ENCODE measurements at regions of chr15 and their contacts with region 1.

Region 1: GRCh38 chr15:99343881-99344551 is 92.7 kb downstream of the LRRC28 start:
- DNase-seq: peak; percentile 45 to 69 (median 52)
- ATAC-seq: peak; percentile 81 to 92 (median 88)
- H3K4me3 ChIP-seq: no peak overlapping the region
- H3K27ac ChIP-seq: peak overlapping the region in 11 of 12 donors; percentile 0 to 50 (median 27)
- H3K4me1 ChIP-seq: peaks cover 0 to 24% (median 9%) of the 10 kb centered on the region in 12 donors
- H3K27me3 ChIP-seq: no peaks in the 10 kb centered on the region
- CTCF ChIP-seq: peak; percentile 33 to 71 (median 52)
- POLR2A ChIP-seq: no peak

Region 2: GRCh38 chr15:97490429-97490828 is 1853.6 kb before region 1 on chr15:
- intact Hi-C with region 1: no loop called
- DNase-seq: no peak
- ATAC-seq: no peak
- H3K4me3 ChIP-seq: no peak overlapping the region
- H3K27ac ChIP-seq: no peak overlapping the region
- H3K4me1 ChIP-seq: no peaks in the 10 kb centered on the region
- H3K27me3 ChIP-seq: no peaks in the 10 kb centered on the region
- CTCF ChIP-seq: no peak
- POLR2A ChIP-seq: no peak

Region 3: DNA sequence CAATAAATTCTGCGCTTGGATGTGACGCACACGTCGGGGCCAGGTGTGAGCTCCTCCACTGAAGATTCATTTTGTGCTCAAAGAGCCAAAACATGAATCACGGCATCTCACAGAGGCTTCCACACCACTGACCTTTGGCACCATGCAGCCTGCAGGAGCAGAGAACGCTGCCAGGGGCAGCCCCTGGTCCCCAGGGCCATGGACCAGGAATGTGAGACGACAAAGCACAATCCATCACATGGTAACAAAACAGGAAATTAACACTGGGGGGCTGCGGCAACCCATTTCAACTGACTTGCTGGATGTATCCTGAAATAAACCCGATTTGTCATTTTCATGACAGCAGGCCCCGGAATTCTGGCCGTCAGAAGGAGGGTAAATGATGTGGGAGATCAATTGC is 863.2 kb before region 1 on chr15:
- intact Hi-C with region 1: no loop called
- DNase-seq: no peak
- ATAC-seq: no peak
- H3K4me3 ChIP-seq: no peak overlapping the region
- H3K27ac ChIP-seq: no peak overlapping the region
- H3K4me1 ChIP-seq: no peaks in the 10 kb centered on the region
- H3K27me3 ChIP-seq: no peaks in the 10 kb centered on the region
- CTCF ChIP-seq: no peak
- POLR2A ChIP-seq: no peak

Region 4: DNA sequence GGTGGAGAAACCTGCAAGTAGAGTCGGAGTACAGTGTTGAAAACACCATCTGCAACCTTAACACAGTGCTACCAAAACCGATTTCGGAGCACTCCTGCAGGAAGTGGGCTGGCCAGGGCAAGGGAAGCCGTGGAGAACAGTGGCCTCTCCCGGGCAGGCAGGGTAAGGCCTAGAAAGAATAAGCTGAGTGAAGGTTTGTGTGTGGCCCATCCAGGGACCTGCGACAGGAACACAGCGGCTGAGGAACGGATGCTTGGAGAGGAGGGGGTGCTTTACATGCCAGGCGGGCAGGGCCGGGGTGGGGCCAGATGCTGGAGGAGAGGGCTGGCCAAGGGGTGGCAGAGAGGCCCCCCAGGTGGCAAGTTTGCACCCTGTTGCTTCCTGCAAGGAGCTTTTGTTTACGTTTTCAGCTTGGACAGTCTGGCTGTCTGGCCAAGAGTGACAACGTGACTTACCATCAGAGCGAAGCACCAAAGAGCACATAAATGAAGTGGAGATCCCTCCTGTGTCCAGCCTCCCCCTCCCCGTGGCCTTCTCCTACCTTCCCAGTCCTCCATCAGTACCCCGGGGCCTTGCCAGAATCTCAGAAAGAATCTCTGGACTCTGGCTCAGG is 492.9 kb before region 1 on chr15:
- intact Hi-C with region 1: no loop called
- DNase-seq: peak; percentile 73 to 83 (median 83)
- ATAC-seq: peak; percentile 60 to 82 (median 71)
- H3K4me3 ChIP-seq: peak overlapping the region in 5 of 12 donors; percentile 62 to 84 (median 70)
- H3K27ac ChIP-seq: peak overlapping the region in 11 of 12 donors; percentile 62 to 93 (median 87)
- H3K4me1 ChIP-seq: peaks cover 17 to 67% (median 44%) of the 10 kb centered on the region in 12 donors
- H3K27me3 ChIP-seq: no peaks in the 10 kb centered on the region
- CTCF ChIP-seq: peak; percentile 63 to 89 (median 73)
- POLR2A ChIP-seq: no peak

Region 5: GRCh38 chr15:99250494-99251435 is 93.3 kb before region 1 on chr15:
- intact Hi-C with region 1: no loop called
- DNase-seq: peak; percentile 98 to 99 (median 99)
- ATAC-seq: peak; percentile 92 to 97 (median 96)
- H3K4me3 ChIP-seq: peak overlapping the region; percentile 42 to 87 (median 74)
- H3K27ac ChIP-seq: peak overlapping the region; percentile 87 to 97 (median 92)
- H3K4me1 ChIP-seq: peaks cover 0 to 48% (median 23%) of the 10 kb centered on the region in 12 donors
- H3K27me3 ChIP-seq: no peaks in the 10 kb centered on the region
- CTCF ChIP-seq: no peak
- POLR2A ChIP-seq: peak in 1 of 2 donors; percentile 67

Region 6: GRCh38 chr15:99296386-99296785 is 47.6 kb before region 1 on chr15:
- intact Hi-C with region 1: loop called in 1 of 10 experiments (anchors 10 kb)
- DNase-seq: no peak
- ATAC-seq: no peak
- H3K4me3 ChIP-seq: no peak overlapping the region
- H3K27ac ChIP-seq: no peak overlapping the region
- H3K4me1 ChIP-seq: no peaks in the 10 kb centered on the region
- H3K27me3 ChIP-seq: no peaks in the 10 kb centered on the region
- CTCF ChIP-seq: no peak
- POLR2A ChIP-seq: no peak

Region 7: DNA sequence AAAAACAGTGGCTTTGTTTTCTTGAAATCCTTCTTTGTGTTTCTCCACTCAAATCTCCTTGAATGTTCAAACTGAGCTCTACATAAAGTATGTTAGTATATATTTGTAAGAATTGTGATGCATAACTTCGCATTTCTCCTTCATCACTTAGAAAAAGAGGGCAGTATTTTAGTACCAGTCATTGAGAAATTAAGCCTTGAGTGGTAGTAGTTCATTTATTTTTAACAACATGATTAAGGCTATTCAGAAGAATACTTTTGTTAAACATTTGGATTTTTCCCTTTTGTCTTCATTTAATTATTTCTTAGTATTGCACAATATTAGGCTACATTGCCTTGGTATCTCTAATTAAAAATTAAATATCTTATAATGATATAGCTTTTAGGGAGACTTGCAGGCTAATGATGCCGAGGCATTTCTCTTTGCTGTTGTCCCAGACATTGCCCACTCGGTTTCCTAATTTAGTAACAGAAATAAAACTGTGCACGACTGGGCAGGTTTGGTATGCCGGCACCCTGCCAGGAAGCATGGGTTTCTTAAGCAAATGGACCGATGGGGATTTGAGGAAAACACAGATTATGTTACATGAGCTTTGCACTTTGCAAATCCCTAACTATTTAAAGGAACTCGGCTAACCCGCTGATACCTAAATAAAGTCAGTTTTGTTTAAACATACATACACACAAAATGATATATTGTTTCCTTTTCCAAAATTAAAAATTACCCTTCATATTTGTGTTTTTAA is 38.1 kb before region 1 on chr15:
- intact Hi-C with region 1: loop called in 1 of 10 experiments (anchors 5 kb)
- DNase-seq: peak; percentile 55 to 75 (median 61)
- ATAC-seq: peak; percentile 59 to 75 (median 64)
- H3K4me3 ChIP-seq: peak overlapping the region in 7 of 12 donors; percentile 4 to 30 (median 22)
- H3K27ac ChIP-seq: peak overlapping the region in 11 of 12 donors; percentile 15 to 84 (median 56)
- H3K4me1 ChIP-seq: peaks cover 0 to 24% (median 6%) of the 10 kb centered on the region in 12 donors
- H3K27me3 ChIP-seq: no peaks in the 10 kb centered on the region
- CTCF ChIP-seq: no peak
- POLR2A ChIP-seq: no peak

Region 8: GRCh38 chr15:99385865-99386264 is 41.8 kb after region 1 on chr15:
- intact Hi-C with region 1: loop called in 1 of 10 experiments (anchors 5 kb)
- DNase-seq: peak; percentile 72 to 85 (median 76)
- ATAC-seq: peak; percentile 86 to 97 (median 96)
- H3K4me3 ChIP-seq: no peak overlapping the region
- H3K27ac ChIP-seq: peak overlapping the region in 9 of 12 donors; percentile 3 to 42 (median 33)
- H3K4me1 ChIP-seq: peaks cover 0 to 23% (median 16%) of the 10 kb centered on the region in 12 donors
- H3K27me3 ChIP-seq: no peaks in the 10 kb centered on the region
- CTCF ChIP-seq: peak in 2 of 12 donors; percentile 11 to 18
- POLR2A ChIP-seq: no peak

Region 9: DNA sequence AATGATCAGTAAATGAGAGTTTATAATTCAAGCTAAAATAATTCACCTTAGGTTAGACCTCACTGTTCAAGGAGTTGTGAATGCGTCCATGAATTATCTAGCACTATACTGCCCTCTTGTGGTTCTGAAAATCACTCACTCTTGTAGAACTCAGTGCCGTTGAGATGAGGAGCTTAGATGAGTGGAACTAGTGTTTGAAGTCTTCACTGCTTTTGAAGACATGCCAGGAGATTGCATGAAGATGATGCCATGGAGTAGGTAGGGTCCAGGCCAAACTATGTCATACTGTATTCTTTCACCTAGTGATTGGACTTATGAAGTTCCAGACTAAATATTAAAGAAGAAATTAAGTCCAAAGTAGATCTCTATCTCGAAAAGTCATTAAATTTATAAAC is 360.4 kb after region 1 on chr15:
- intact Hi-C with region 1: loop called in 1 of 10 experiments (anchors 5 kb)
- DNase-seq: peak in 2 of 5 donors; percentile 39 to 57
- ATAC-seq: peak; percentile 71 to 79 (median 76)
- H3K4me3 ChIP-seq: peak overlapping the region in 1 of 12 donors; percentile 8
- H3K27ac ChIP-seq: peak overlapping the region; percentile 21 to 87 (median 80)
- H3K4me1 ChIP-seq: peaks cover 3 to 69% (median 45%) of the 10 kb centered on the region in 12 donors
- H3K27me3 ChIP-seq: no peaks in the 10 kb centered on the region
- CTCF ChIP-seq: peak; percentile 66 to 85 (median 80)
- POLR2A ChIP-seq: no peak